ENCODE measurements at regions of chr2 and their contacts with region 1.

Region 1: DNA sequence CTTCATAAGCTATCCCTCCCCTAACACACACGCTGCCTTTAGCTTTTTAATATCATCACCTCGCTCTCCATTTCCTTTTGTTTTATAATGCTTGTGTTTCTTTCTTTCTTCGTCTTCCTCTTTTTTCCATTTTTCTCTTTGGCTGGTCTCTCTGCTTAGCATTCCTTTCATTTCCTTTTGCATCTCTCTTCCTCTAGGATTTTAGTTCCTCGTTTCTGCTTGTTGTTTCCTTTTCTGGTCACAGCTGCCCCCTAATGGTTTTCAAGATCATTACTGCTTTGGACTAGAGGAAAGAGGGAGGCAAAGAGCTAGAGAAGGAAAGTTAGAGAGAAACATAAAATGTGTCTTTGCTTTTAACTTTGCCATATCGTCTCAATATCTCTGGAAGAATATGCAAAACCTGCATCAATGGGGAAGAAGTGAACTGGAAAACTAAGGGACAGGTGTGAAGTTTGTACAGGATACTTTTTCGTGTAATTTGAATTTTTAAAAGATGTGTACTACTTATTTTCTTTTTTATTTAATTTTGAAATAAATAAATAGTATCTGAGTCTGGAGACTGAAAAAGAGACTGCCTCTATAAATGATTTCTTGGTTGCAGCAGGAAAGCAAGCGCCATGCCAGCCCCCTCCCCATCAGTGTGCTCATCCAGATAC is 6.3 kb upstream of the NRP2 start:
- DNase-seq: no peak
- ATAC-seq: no peak
- H3K4me3 Mint-ChIP-seq: no peak overlapping the region
- H3K27ac Mint-ChIP-seq: no peak overlapping the region
- H3K4me1 Mint-ChIP-seq: peaks cover 4% of the 10 kb centered on the region
- H3K27me3 Mint-ChIP-seq: peaks cover 14% of the 10 kb centered on the region
- CTCF ChIP-seq: peak; percentile 89

Region 2: GRCh38 chr2:204325468-204325867 is 1350.5 kb before region 1 on chr2:
- CTCF ChIA-PET with region 1: interaction called, 3 read pairs
- POLR2A ChIA-PET with region 1: no interaction called
- intact Hi-C with region 1: loop called (anchors 5 kb)
- DNase-seq: peak; percentile 64
- ATAC-seq: peak; percentile 77
- H3K4me3 Mint-ChIP-seq: no peak overlapping the region
- H3K27ac Mint-ChIP-seq: no peak overlapping the region
- H3K4me1 Mint-ChIP-seq: peaks cover 2% of the 10 kb centered on the region
- H3K27me3 Mint-ChIP-seq: peaks cover 7% of the 10 kb centered on the region
- CTCF ChIP-seq: peak; percentile 90

Region 3: GRCh38 chr2:205323929-205324328 is 352.1 kb before region 1 on chr2:
- CTCF ChIA-PET with region 1: interaction called, 13 read pairs
- POLR2A ChIA-PET with region 1: no interaction called
- intact Hi-C with region 1: loop called (anchors 5 kb)
- DNase-seq: no peak
- ATAC-seq: no peak
- H3K4me3 Mint-ChIP-seq: no peak overlapping the region
- H3K27ac Mint-ChIP-seq: no peak overlapping the region
- H3K4me1 Mint-ChIP-seq: no peaks in the 10 kb centered on the region
- H3K27me3 Mint-ChIP-seq: no peaks in the 10 kb centered on the region
- CTCF ChIP-seq: peak; percentile 54

Region 4: DNA sequence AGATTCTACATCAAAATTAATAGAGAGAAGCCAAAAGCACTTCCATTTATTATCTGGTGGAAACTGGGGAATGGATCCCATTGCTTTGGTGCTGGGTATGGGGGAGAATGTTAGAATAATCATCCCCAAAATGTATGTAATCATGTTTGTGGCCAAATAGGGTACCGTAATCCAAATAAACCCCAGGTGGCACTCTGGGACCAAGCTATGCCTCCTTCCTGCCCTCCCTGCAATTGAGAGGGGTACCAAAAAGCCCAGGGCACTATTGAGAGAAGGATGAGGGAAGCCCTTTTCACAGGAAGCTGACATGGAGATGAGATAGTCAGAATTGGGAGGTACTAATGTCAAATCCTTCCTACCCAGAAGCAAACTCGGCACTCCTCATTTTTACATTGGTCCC is 79.4 kb before region 1 on chr2:
- CTCF ChIA-PET with region 1: interaction called, 17 read pairs
- POLR2A ChIA-PET with region 1: no interaction called
- intact Hi-C with region 1: loop called (anchors 5 kb)
- DNase-seq: no peak
- ATAC-seq: no peak
- H3K4me3 Mint-ChIP-seq: no peak overlapping the region
- H3K27ac Mint-ChIP-seq: no peak overlapping the region
- H3K4me1 Mint-ChIP-seq: no peaks in the 10 kb centered on the region
- H3K27me3 Mint-ChIP-seq: peaks cover 1% of the 10 kb centered on the region
- CTCF ChIP-seq: no peak

Region 5: DNA sequence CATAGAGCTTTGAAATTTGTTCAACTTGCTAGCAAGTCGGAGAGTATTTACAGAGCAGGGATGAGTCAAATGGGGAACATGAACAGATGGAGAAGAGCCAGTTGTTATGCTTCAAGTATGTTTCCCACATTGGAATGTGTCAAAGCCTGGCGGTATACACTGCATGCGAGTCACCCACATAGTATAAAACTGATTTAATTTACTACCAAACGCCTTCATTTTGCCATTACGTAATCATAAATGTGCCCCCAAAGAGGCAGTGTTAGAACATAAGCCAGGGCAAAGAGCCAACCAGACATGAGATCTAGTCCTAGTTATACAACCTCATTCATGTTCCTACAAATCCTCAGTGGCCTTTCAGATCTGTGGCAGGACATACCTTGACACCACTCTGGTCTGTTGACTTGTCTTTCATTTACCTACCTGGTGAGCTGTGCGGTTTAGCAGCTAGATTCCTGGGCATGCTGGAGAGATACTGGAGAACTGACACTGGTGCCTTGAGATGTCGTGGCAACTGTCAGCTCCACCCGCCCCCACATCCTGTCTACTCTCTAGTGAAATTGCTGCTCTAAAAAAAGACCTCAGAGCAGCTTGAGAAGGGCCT is 15.4 kb before region 1 on chr2:
- CTCF ChIA-PET with region 1: interaction called, 33 read pairs
- POLR2A ChIA-PET with region 1: no interaction called
- intact Hi-C with region 1: no loop called
- DNase-seq: peak; percentile 79
- ATAC-seq: peak; percentile 87
- H3K4me3 Mint-ChIP-seq: peak overlapping the region; percentile 37
- H3K27ac Mint-ChIP-seq: peak overlapping the region; percentile 83
- H3K4me1 Mint-ChIP-seq: peaks cover 22% of the 10 kb centered on the region
- H3K27me3 Mint-ChIP-seq: no peaks in the 10 kb centered on the region
- CTCF ChIP-seq: no peak

Region 6: DNA sequence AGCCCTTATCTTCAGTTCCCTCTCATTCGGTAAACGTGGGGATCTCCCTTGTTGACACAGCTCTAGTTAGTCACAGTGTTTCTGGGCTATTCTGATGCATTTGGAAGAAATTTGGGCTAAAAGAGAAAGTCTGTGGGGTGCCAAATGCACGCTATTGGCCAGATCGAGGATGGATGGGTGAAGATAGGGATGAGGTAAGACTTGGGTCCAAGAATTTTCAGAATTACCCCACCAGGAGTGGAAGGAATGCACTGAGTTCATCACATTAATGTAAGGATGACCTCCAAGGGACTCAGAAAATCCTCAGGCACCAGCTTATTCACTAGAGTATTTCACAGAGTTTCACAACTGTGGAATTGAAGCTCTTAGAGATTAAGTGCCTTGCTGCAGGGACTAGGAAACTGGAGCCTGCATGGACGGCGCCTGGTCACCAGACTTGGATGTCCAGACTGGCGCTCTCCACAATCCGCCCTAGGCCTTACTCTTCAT is 55.6 kb after region 1 on chr2:
- CTCF ChIA-PET with region 1: no interaction called
- POLR2A ChIA-PET with region 1: no interaction called
- intact Hi-C with region 1: no loop called
- DNase-seq: no peak
- ATAC-seq: no peak
- H3K4me3 Mint-ChIP-seq: no peak overlapping the region
- H3K27ac Mint-ChIP-seq: no peak overlapping the region
- H3K4me1 Mint-ChIP-seq: no peaks in the 10 kb centered on the region
- H3K27me3 Mint-ChIP-seq: no peaks in the 10 kb centered on the region
- CTCF ChIP-seq: no peak

Region 7: GRCh38 chr2:205763708-205764211 is 87.8 kb after region 1 on chr2:
- CTCF ChIA-PET with region 1: no interaction called
- POLR2A ChIA-PET with region 1: no interaction called
- intact Hi-C with region 1: no loop called
- DNase-seq: peak; percentile 37
- ATAC-seq: no peak
- H3K4me3 Mint-ChIP-seq: no peak overlapping the region
- H3K27ac Mint-ChIP-seq: no peak overlapping the region
- H3K4me1 Mint-ChIP-seq: no peaks in the 10 kb centered on the region
- H3K27me3 Mint-ChIP-seq: peaks cover 15% of the 10 kb centered on the region
- CTCF ChIP-seq: peak; percentile 30

Measured in activated CD8-positive, alpha-beta T cell treated with anti-CD3 and anti-CD28 coated beads for 36 hours (primary cell).